ENCODE measurements at regions of chr19 and their contacts with region 1.

Region 1: DNA sequence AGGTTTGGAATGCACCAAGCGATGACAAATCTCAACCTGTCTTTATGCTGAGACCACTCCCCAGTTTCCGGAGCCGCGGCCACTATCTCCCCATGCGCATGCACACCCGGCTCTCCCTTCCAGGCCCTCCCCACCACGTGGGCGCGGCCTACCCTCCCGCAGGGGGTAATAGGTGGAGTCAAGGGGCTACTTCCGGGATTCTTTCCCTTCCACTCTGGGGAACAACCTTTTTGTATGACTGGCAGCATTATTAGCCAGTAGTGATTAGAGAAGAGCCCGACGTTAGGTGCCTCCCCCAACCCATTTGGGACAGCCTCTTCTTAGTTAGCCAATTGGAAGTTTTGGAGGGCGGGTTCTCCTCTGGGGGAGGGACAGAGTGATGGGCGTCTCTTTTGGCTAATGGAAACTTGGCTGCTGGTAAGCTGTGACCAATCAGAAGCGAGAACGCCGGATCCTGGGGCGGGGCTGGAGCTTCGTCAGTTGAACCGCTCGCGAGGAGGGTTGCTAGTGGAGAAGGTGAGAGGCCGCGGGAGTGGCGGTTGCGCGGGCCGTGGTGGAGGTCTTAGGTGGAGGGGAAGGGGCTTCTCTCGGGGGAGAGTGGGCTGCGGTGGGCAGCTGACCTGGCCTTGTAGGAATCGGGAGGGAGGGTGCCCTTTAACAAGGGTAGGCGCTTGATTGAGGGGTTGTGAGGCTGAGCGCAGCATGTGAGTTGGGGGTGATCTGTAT is at the start of gene CCDC61:
- DNase-seq: peak; percentile 98
- H3K4me3 ChIP-seq: peak within 1 kb of the TSS; percentile 73
- H3K27me3 ChIP-seq: no peaks in the 10 kb centered on the region
- CTCF ChIP-seq: no peak
- polyA plus RNA-seq, gene CCDC61: 6.7 and 8.4 TPM in 2 replicates

Region 2: DNA sequence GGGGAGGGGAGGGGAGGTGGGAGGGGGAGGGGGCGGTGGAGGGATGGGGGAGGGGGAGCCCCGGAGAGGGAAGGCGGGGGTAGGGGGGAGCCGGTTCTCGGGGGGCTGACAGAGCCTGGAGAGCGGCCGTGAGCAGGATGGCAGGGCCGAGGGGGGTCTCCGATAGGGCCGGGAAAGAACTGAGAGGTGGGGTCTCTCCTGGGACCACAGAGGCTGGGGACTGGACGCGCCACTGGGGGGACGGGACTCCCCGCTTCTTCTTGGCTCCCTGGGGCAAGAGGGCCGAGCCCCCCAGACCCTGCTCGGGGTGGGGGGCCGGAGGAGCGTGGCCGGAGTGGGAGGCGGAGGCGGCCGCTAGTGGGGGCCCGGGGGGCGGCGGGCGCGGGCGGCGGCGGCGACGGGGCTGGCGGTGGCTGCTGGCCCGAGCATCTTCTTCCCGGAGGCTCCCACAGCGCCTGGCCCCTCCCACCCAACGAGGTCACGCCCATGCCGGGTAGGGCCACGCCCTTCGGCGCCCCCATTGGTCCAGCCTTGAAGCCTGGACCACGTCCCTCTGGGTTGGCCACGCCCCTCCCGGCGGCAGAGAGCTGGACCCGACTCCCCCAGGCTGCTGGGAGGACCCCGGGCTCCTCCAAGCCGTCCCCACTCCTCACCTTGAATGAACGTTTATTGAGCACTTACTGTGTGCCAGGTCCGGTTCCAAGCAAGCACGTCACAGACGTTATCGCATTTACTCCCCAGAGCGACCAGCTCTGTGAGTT is 21.4 kb before region 1 on chr19 and contains the start of gene NOVA2:
- CTCF ChIA-PET with region 1: no interaction called
- POLR2A ChIA-PET with region 1: no interaction called
- DNase-seq: no peak
- H3K4me3 ChIP-seq: peak within 1 kb of the TSS; percentile 27
- H3K27me3 ChIP-seq: peaks cover 25% of the 10 kb centered on the region
- CTCF ChIP-seq: no peak
- polyA plus RNA-seq, gene NOVA2: 0.01 TPM in 2 replicates

Region 3: DNA sequence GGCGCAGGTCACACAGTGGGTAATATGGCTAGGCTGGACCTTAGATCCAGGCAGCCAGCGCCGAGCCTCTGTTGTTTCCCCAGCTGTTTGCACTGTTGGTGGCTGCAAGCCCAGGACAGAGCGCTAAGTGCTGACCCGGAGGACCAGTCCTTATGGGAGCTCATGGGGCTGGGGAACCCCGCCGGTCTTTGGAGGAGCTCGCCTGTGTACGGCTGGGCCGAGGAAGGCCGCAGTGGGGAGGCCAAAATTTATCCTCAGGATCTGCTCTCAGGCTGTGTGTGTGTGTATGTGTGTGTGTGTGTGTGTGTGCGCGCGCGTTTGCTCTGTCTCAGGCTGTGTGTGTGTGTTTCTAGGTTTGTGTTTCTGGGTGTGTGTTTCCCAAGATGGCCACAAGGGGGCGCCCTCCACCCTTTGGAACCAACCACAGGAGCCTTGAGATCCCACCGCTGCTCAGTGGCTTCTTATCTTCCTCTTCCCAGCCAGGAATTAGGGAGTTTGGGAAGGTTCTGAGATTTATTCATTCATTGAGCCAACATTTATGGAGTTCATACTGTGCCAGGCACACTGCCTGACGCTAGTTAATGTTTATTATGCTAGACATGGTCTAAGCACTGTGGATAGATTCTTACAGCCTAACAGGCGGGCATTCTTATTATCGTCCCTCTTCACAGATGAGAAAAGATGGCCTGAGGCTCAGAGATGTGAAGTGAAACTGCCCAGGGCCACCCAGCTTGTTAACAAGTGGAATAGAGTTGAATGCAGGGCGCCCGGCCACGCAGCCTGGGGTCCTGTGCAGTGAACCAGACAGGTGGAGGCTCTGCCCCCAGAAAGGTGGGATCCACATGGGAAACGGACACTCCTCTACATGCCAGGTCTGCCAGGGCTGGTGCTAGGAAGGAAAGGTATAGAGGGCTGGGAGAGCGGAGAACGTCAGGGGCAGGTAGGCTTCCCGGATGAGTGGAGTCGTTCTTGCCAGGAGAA is 14.7 kb after region 1 on chr19:
- CTCF ChIA-PET with region 1: interaction called, 21 read pairs
- POLR2A ChIA-PET with region 1: no interaction called
- DNase-seq: no peak
- H3K4me3 ChIP-seq: no peak overlapping the region
- H3K27me3 ChIP-seq: peaks cover 3% of the 10 kb centered on the region
- CTCF ChIP-seq: peak; percentile 84